ENCODE measurements at regions of chr7 and their contacts with region 1.

Region 1: DNA sequence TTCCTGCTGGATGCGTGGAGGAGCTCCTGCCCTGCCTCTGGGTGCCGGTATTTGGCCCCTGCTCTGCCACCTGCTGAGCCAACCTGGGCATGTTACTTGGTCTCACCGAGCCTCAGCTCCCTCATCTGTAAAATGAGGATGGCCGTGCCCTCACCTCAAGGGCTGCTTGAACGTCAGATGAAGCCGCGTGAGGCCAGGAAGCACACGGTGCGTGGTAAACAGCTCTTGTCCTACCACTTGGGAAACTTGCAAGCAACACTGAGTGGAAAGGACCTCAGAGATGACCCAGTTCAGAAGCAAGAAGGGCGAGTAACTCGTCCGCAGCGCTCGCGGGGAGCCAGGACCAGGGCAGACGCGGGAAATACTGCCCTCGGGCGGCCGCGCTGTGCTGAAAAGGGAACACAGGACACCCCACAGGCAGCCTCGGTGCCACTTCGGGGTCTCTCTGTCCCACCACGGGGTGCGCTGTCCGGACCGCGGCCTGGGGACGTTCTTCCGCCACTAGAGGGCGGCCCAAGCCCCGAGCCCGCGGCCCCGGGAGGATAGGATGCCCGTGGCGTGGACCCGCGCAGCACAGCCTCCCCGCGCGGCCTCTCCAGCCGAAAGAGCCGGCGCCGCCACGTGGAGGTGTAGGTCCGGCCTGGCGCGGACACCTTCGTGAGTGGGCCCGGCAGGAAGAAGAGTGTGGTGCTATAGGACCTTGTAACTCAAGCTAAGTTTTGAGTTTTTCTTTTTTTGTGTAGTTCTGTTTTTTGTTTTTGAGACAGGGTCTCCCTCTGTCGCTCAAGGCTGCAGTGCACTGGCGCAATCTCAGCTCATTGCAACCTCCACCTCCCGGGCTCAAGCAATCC is 94.1 kb downstream of the PRKAG2 start:
- DNase-seq: peak; percentile 98
- H3K4me3 ChIP-seq: peak overlapping the region; percentile 28 to 59
- H3K27ac ChIP-seq: no peak overlapping the region
- H3K4me1 ChIP-seq: peaks cover 0 to 7% of the 10 kb centered on the region in 2 experiments; a peak in 1 of 4 replicates
- H3K27me3 ChIP-seq: peaks cover 15% of the 10 kb centered on the region; the same call in 1 of the 2 replicates
- CTCF ChIP-seq: peak; percentile 98
- EP300 ChIP-seq: no peak; a peak in 1 of 4 replicates
- RAD21 ChIP-seq: peak; percentile 75

Region 2: DNA sequence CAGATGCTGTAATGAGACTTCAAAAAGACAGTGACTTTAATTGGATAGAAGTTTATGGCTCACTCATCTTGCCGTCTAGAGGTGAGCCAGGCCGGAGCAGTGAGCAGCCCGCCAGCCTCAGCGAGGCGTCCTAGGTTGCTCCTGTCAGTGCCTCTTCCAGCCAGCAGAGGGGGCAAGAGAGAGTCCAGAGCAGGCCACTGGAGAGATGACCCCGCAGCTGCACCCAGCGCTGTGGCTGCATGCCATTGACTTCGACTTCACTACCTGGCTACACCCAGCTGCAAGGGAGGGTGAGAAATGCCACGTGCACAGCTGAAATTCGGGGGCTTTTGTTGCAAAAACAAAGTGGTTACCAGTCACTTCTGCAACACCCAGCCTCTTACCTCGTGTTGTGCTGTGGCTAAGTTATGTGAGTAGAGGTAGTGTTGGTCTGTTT is 414.7 kb before region 1 on chr7:
- CTCF ChIA-PET with region 1: interaction called, 11 read pairs
- POLR2A ChIA-PET with region 1: no interaction called
- DNase-seq: peak; percentile 91
- H3K4me3 ChIP-seq: no peak overlapping the region
- H3K27ac ChIP-seq: no peak overlapping the region
- H3K4me1 ChIP-seq: peaks cover 0 to 13% of the 10 kb centered on the region in 2 experiments; a peak in 2 of 4 replicates
- H3K27me3 ChIP-seq: no peaks in the 10 kb centered on the region
- CTCF ChIP-seq: peak; percentile 99
- EP300 ChIP-seq: no peak
- RAD21 ChIP-seq: peak; percentile 90

Region 3: DNA sequence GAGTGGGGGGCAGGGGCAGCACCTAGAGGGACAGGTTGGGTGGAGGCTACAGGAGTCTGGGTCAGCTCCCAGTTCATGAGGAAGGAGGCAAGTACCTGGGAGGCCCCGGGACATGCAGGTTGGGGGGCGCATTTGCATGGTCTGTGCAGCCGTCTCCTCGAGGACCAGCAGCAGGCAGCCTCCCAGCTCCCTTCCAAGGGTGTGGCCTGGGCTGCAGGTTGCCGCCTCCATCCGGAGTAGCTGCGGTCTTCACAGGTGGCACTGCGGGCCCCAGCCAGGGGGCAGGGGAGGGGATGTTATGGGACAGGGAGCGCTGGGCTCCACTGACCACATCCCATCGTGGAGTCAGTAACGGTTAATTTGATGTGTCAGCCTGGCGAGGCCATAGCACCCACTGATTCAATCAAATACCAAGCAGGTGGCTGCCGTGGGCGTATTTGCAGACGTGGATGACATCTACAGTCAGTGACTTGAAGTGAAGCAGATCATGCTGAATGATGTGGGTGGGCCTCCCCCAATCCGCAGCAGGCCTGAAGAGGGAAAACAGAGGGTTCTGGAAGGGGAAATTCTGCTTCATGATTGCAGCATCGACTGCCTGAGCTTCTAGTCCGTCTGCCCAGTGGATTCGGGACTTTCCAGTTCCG is 12.5 kb after region 1 on chr7:
- CTCF ChIA-PET with region 1: interaction called, 325 read pairs
- POLR2A ChIA-PET with region 1: no interaction called
- DNase-seq: no peak
- H3K4me3 ChIP-seq: no peak overlapping the region
- H3K27ac ChIP-seq: no peak overlapping the region
- H3K4me1 ChIP-seq: peaks cover 0 to 19% of the 10 kb centered on the region in 2 experiments; a peak in 1 of 4 replicates
- H3K27me3 ChIP-seq: no peaks in the 10 kb centered on the region
- CTCF ChIP-seq: no peak
- EP300 ChIP-seq: no peak
- RAD21 ChIP-seq: no peak

Region 4: DNA sequence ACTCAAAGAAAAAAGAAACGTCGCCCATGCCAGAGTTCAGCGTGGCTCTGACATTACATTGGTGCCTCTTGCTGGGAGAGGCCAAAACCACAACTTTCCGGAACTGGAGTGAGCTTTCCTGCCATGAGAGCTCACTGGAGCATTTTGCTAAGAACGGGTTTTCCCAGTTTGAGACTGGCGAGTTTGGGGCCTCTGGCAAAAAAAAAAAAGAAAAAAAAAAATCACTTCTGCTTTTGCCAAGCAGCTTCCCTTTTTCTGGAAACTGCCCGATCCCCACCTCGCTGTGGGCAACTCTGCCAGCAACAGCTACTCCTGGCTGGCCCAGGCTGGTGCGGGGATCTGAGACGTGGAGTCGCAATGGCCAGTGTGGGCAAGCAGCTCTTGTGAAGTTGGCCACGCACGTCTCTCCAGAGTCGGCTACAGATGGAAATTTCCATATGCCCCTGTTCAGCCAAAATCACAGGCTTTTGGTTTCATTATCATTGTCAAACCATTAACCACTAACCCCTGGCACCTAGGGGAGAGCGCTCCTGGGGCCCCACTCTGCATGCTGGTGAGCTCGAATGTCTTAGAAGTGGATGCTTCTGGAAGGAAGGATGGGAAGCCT is 68.4 kb after region 1 on chr7:
- CTCF ChIA-PET with region 1: interaction called, 17 read pairs
- POLR2A ChIA-PET with region 1: no interaction called
- DNase-seq: no peak
- H3K4me3 ChIP-seq: no peak overlapping the region
- H3K27ac ChIP-seq: no peak overlapping the region
- H3K4me1 ChIP-seq: peaks cover 0 to 5% of the 10 kb centered on the region in 2 experiments; a peak in 1 of 4 replicates
- H3K27me3 ChIP-seq: peaks cover 36% of the 10 kb centered on the region
- CTCF ChIP-seq: no peak
- EP300 ChIP-seq: no peak
- RAD21 ChIP-seq: no peak

Region 5: GRCh38 chr7:151876899-151877777 is 94.3 kb after region 1 on chr7 and contains the start of gene PRKAG2:
- CTCF ChIA-PET with region 1: interaction called, 26 read pairs
- POLR2A ChIA-PET with region 1: no interaction called
- DNase-seq: peak; percentile 91
- H3K4me3 ChIP-seq: peak within 1 kb of the TSS; percentile 64 to 80
- H3K27ac ChIP-seq: peak within 1 kb of the TSS in 1 of 2 experiments; percentile 80; a peak in 2 of 4 replicates
- H3K4me1 ChIP-seq: peaks cover 0 to 15% of the 10 kb centered on the region in 2 experiments; a peak in 2 of 4 replicates
- H3K27me3 ChIP-seq: peaks cover 64% of the 10 kb centered on the region
- CTCF ChIP-seq: 0 out of 2 replicates have a peak, but pooled peaks have one; percentile 9
- EP300 ChIP-seq: no peak
- RAD21 ChIP-seq: no peak
- polyA plus RNA-seq, gene PRKAG2: 51.6 and 62.0 TPM in 2 replicates

Region 6: GRCh38 chr7:151927011-151927410 is 144.2 kb after region 1 on chr7:
- CTCF ChIA-PET with region 1: interaction called, 120 read pairs
- POLR2A ChIA-PET with region 1: no interaction called
- DNase-seq: no peak
- H3K4me3 ChIP-seq: no peak overlapping the region
- H3K27ac ChIP-seq: no peak overlapping the region
- H3K4me1 ChIP-seq: peaks cover 0 to 3% of the 10 kb centered on the region in 2 experiments; a peak in 1 of 4 replicates
- H3K27me3 ChIP-seq: peaks cover 6% of the 10 kb centered on the region; the same call in 1 of the 2 replicates
- CTCF ChIP-seq: no peak
- EP300 ChIP-seq: no peak
- RAD21 ChIP-seq: no peak

Region 7: GRCh38 chr7:151984606-151985005 is 201.8 kb after region 1 on chr7:
- CTCF ChIA-PET with region 1: interaction called, 14 read pairs
- POLR2A ChIA-PET with region 1: no interaction called
- DNase-seq: no peak
- H3K4me3 ChIP-seq: no peak overlapping the region
- H3K27ac ChIP-seq: no peak overlapping the region
- H3K4me1 ChIP-seq: no peaks in the 10 kb centered on the region
- H3K27me3 ChIP-seq: peaks cover 17% of the 10 kb centered on the region; the same call in 1 of the 2 replicates
- CTCF ChIP-seq: no peak
- EP300 ChIP-seq: no peak
- RAD21 ChIP-seq: no peak

Measured in SK-N-SH (cell line).